Activated T-helper 1 cell treated with anti-CD3 and anti-CD28 coated beads, Interleukin-12 subunit alpha, Interleukin-12 subunit beta, Interleukin-2, Interleukin-4 antibody, amounts not matched to agents 30 ng/mL and 10 ng/mL and 1 ng/mL, durations not matched to agents 14 hours and 24 hours and 36 hours (primary cell): ENCODE measurements at regions of chr18 and their contacts with region 1.

Region 1: DNA sequence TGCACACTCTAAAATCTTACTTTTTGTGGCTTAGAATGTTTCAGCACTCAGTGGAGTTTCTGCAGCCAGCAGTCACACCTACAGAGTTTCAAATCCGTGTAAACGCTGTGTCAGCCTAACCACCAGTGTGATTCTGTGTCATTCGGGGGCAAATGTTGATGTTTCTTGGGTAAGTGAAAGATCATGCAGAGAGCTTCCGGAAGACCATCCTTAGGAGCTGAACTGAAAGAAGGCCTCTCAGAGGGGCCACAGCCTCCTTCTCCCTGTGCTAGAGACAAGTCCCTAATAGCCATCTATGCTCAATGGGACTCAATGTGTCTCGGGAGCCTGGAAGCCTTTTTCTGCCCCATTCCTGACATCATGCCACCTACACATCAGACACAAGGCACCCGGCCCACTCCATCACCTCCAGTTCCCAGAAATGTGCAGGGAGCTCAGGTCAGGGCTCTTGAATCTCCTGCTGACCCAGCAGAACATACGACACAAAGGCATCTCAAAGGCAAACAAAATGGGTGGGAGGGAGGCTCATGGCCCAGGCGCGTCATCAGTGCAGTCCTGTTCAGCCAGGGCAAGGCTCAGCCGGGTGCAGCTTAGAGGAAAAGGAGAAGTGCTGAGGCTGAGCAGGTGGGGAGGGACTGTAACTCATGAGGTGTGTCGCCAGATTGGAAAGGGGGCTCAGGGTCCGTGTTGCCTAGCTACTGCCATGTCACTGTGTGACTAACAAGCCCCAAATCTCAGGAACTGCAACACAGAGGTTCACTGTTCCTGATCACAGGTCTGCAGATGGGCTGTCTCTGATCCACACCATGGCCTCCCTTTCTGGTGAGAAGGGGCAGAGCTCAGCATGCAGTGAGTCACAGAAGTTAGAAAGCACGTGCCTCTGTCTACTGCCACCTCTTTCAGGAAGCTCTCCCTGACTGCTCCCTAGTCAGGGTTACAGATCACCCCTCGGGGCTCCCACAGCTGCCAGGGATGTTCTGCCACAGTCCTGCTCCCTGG is 82.0 kb downstream of the SMAD7 start:
- DNase-seq: peak; percentile 47
- H3K4me3 Mint-ChIP-seq: peak overlapping the region; percentile 45
- H3K27ac Mint-ChIP-seq: peak overlapping the region; percentile 96
- H3K4me1 Mint-ChIP-seq: peaks cover 40% of the 10 kb centered on the region
- H3K27me3 Mint-ChIP-seq: no peaks in the 10 kb centered on the region

Region 2: DNA sequence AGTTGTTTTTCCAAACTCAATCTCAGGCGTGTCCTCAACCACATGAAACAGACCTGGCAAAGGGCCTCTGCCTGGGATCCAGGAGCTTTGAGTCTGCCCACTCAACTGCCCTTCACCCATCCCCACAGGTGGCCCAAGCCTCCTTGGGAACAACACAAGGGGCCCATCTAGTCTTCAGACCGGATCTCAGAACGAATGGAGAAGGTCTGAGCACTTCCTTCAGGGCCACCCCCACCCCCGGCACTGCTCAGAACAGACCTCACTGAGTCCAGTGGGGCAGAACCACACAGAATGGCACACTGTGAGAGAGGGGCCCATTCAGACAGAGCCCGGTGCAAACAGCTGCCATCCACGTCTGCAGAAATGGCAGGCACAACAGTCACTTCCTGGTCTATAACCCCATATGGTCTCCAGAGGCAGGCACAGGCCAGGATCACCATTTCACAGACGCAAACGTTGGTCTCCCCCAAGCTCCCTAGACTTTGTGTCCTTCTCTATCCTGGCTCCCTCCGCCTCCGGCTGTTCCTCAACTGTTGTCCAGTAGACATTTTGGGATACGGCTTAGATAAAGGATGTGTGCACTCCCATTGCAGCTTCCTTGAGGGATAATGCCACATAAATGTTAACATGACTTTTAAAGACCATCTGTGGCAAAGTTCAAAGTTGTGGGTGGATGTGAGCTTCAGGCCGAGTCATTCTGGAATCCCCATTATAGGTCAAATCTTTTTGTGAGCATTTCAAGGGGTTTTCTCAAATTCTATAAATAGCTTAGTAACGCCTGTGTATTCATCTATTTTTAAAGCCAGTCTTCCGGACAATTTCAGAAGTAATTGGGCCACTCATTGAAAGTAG is 67.7 kb before region 1 on chr18:
- intact Hi-C with region 1: loop called (anchors 1 kb)
- DNase-seq: no peak
- H3K4me3 Mint-ChIP-seq: peak overlapping the region; percentile 75
- H3K27ac Mint-ChIP-seq: peak overlapping the region; percentile 99
- H3K4me1 Mint-ChIP-seq: peaks cover 66% of the 10 kb centered on the region
- H3K27me3 Mint-ChIP-seq: no peaks in the 10 kb centered on the region

Region 3: GRCh38 chr18:48820483-48821250 is 48.1 kb before region 1 on chr18:
- intact Hi-C with region 1: loop called (anchors 1 kb)
- DNase-seq: no peak
- H3K4me3 Mint-ChIP-seq: peak overlapping the region; percentile 21
- H3K27ac Mint-ChIP-seq: peak overlapping the region; percentile 62
- H3K4me1 Mint-ChIP-seq: peaks cover 51% of the 10 kb centered on the region
- H3K27me3 Mint-ChIP-seq: peaks cover 10% of the 10 kb centered on the region

Region 4: DNA sequence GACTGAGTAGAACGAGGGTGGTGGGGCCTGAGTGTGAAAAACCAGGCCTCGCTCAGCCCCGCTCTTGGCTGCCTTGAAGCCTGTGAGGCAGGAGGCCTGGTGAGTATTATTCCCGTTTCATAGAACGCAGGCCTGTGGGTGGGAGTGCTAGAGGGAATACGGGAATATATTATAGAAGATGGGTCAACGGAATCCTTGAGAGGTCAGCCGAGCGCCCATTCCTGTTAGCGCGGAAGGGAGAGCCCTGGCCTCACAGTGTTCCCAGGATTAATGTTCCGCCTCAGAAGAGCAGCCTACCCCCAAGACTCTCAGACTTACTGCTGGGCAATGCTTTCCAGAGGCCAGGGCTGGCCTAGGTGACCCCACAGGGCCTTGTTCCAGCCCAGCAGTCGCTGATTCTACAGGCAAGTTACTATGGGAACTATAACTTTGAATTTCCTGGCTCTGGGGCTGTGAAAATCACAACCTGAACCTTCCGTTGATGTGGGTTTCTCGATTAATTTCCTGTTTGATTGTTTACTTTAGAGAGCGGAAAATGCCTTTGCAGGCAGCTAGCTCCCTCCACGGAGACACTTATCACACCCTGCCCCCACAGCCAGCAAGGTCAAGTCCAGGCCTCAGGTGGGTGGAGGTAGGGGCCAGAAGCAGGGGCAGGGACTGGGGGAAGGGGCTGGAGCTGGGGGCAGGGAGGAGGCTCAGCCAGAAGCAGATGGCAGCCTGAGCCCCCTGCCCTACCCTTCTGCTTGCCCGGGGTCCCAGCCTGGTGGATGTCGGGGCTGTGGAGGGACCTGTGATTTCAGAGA is 26.3 kb before region 1 on chr18:
- intact Hi-C with region 1: loop called (anchors 2 kb)
- DNase-seq: peak; percentile 38
- H3K4me3 Mint-ChIP-seq: peak overlapping the region; percentile 39
- H3K27ac Mint-ChIP-seq: peak overlapping the region; percentile 87
- H3K4me1 Mint-ChIP-seq: peaks cover 59% of the 10 kb centered on the region
- H3K27me3 Mint-ChIP-seq: peaks cover 4% of the 10 kb centered on the region

Region 5: GRCh38 chr18:48896690-48897511 is 28.1 kb after region 1 on chr18:
- intact Hi-C with region 1: loop called (anchors 2 kb)
- DNase-seq: no peak
- H3K4me3 Mint-ChIP-seq: no peak overlapping the region
- H3K27ac Mint-ChIP-seq: no peak overlapping the region
- H3K4me1 Mint-ChIP-seq: peaks cover 30% of the 10 kb centered on the region
- H3K27me3 Mint-ChIP-seq: peaks cover 4% of the 10 kb centered on the region

Region 6: DNA sequence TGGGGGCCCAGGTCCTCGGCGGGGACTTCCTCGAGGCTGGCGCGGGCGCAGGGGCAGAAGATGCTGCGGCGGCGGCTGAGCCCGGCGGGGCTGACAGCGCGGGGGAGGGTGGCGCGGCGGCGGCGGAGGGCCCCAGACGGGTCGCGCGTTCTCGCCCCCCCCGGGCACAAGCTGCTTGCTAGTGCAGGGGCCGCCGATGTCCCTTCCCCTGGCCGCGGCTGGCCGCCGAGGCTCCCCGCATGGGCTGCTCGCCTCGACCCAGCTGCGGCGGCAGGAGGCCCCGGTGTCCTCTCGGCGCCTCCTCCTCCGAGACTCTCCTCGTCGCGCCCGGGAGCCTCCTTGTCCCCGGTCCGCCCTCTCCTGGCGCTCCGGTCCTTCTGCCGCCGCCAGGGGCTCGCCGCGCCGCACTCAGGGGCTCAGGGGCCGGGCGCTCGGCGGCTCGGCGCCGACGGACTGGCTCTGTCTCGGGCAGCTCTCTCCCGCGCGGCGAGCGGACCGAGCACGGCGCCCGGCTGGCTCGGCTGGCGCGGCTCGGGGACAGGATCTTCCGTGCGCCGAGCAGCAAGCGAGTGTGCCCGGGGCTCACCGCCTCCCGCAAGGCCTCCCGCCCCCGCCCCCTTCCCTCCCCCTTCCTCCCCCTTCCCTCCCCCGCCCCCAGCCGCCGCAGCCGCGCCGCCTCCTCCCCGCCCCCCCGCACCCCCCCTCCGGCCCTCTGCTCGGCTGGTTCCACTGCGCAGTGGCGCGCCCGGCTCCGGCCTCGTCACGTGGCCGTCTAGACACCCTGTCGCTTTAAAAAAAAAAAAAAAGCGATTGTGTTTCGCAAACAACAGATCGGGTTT is 82.9 kb after region 1 on chr18:
- intact Hi-C with region 1: loop called (anchors 1 kb)
- DNase-seq: peak; percentile 68
- H3K4me3 Mint-ChIP-seq: peak overlapping the region; percentile 98
- H3K27ac Mint-ChIP-seq: peak overlapping the region; percentile 96
- H3K4me1 Mint-ChIP-seq: peaks cover 45% of the 10 kb centered on the region
- H3K27me3 Mint-ChIP-seq: peaks cover 14% of the 10 kb centered on the region

Region 7: GRCh38 chr18:49055754-49056172 is 187.0 kb after region 1 on chr18:
- intact Hi-C with region 1: no loop called
- DNase-seq: no peak
- H3K4me3 Mint-ChIP-seq: peak overlapping the region; percentile 37
- H3K27ac Mint-ChIP-seq: peak overlapping the region; percentile 67
- H3K4me1 Mint-ChIP-seq: peaks cover 34% of the 10 kb centered on the region
- H3K27me3 Mint-ChIP-seq: no peaks in the 10 kb centered on the region

Region 8: GRCh38 chr18:49486953-49487710 is 618.4 kb after region 1 on chr18 and contains the start of gene C18orf32:
- intact Hi-C with region 1: loop called (anchors 1 kb)
- DNase-seq: peak; percentile 92
- H3K4me3 Mint-ChIP-seq: peak within 1 kb of the TSS; percentile 93
- H3K27ac Mint-ChIP-seq: peak within 1 kb of the TSS; percentile 98
- H3K4me1 Mint-ChIP-seq: peaks cover 53% of the 10 kb centered on the region
- H3K27me3 Mint-ChIP-seq: no peaks in the 10 kb centered on the region
- total RNA-seq, gene C18orf32: 28.7 and 31.2 TPM in 2 replicates